ENCODE measurements at regions of chr11 and their contacts with region 1.

Region 1: DNA sequence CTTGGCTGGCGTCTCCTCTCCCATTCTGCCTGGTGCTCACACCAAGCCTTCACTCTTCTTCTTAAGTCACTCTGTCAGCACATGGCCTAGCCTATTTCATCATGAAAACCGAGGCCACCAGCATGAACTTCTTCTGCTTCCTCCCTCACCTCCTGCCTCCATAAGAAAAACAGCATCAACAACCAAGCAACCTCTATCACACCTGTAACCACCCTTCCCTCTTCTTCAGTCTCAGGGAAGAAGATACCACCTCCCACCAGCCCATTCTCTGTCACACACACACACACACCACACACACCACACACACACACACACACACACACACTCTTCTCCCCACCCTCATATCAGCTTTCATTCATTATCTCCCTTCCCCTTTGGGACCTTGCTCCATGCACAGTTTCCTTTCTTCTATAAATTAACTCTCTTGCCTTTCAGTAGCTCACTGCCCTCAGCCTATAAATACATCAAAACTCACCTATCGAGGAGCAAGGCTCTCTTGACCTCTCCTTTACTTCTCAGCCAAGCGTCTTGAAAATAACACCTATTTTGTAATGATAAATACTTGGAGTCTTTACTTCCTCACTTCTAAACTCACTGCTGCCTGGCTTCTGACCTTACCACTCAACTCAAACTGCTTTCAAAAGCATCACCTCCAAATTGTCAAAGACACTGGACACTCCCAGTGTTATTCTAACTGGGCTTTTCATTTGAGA is 36.6 kb downstream of the SC5D start:
- DNase-seq: no peak
- H3K4me3 ChIP-seq: no peak overlapping the region
- H3K4me3 Mint-ChIP-seq: no peak overlapping the region
- H3K27ac Mint-ChIP-seq: no peak overlapping the region
- H3K4me1 ChIP-seq: peaks cover 10% of the 10 kb centered on the region
- H3K4me1 Mint-ChIP-seq: no peaks in the 10 kb centered on the region
- H3K27me3 ChIP-seq: no peaks in the 10 kb centered on the region
- H3K27me3 Mint-ChIP-seq: no peaks in the 10 kb centered on the region
- CTCF ChIP-seq: no peak

Region 2: DNA sequence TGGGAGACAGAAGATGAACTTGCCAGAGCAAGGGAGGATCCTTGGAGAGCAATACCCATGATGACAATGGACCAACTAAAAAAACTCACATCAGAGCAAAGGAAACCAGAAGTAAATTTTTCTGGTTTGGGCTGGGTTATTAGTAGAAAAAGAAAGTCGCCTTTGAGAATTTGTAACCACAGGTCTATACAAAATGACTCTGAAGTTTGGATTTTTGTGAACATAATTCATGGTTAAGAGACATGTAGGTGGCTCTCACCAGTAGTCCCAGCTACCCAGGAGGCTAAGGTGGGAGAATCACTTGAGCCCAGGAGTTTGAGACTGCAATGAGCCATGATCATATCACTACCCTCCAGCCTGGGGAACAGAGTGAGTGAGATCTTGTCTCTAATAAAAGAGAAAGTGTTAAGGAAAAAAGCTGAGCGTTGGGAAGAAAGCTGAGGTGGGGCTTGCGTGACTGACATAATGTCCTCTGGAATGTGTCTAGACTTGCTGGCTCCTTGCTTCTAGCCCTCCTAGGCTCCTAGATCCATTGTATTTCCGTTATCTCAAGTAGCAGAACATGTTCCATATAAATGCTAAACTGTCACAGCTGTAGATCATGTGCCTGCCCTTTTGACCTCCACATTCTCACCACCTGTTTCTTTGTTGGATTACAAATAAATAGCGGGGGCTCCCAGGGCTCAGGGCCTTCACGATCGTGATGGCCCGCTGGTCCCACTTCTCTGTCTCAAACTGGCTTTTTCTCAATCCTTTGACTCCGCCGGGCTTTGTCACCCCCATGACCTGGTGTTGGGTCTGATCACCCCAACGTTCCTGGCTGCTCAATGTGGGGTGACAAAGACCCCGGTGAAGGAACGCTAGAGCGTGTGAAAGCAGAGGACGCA is 92.8 kb before region 1 on chr11:
- CTCF ChIA-PET with region 1: no interaction called
- POLR2A ChIA-PET with region 1: no interaction called
- intact Hi-C with region 1: no loop called
- DNase-seq: no peak
- H3K4me3 ChIP-seq: no peak overlapping the region
- H3K4me3 Mint-ChIP-seq: no peak overlapping the region
- H3K27ac Mint-ChIP-seq: no peak overlapping the region
- H3K4me1 ChIP-seq: peaks cover 19% of the 10 kb centered on the region
- H3K4me1 Mint-ChIP-seq: peaks cover 26% of the 10 kb centered on the region
- H3K27me3 ChIP-seq: no peaks in the 10 kb centered on the region
- H3K27me3 Mint-ChIP-seq: peaks cover 5% of the 10 kb centered on the region
- CTCF ChIP-seq: no peak

Region 3: DNA sequence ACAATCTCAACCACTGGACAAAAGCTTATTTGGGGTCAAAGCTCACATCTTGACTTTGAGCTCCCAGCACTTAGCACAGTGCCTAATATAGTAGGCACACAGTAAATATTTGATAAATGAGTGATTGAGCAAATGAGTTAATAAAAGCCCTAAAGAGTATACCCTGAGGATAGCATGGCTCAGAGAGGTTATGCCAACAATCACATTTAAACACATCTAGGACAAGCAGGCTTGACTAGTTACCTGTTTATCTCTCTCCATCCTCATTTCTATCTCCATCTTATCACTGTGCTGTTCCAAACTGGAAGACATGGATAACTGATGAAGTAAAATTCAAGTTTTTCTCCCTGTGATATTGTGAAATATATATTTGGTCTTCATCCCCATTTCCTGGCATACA is 25.9 kb after region 1 on chr11:
- CTCF ChIA-PET with region 1: no interaction called
- POLR2A ChIA-PET with region 1: no interaction called
- intact Hi-C with region 1: loop called (anchors 2 kb)
- DNase-seq: no peak
- H3K4me3 ChIP-seq: no peak overlapping the region
- H3K4me3 Mint-ChIP-seq: no peak overlapping the region
- H3K27ac Mint-ChIP-seq: no peak overlapping the region
- H3K4me1 ChIP-seq: peaks cover 8% of the 10 kb centered on the region
- H3K4me1 Mint-ChIP-seq: peaks cover 8% of the 10 kb centered on the region
- H3K27me3 ChIP-seq: no peaks in the 10 kb centered on the region
- H3K27me3 Mint-ChIP-seq: peaks cover 7% of the 10 kb centered on the region
- CTCF ChIP-seq: no peak

Region 4: GRCh38 chr11:121389651-121390050 is 60.5 kb after region 1 on chr11:
- CTCF ChIA-PET with region 1: no interaction called
- POLR2A ChIA-PET with region 1: no interaction called
- intact Hi-C with region 1: no loop called
- DNase-seq: no peak
- H3K4me3 ChIP-seq: no peak overlapping the region
- H3K4me3 Mint-ChIP-seq: no peak overlapping the region
- H3K27ac Mint-ChIP-seq: no peak overlapping the region
- H3K4me1 ChIP-seq: no peaks in the 10 kb centered on the region
- H3K4me1 Mint-ChIP-seq: no peaks in the 10 kb centered on the region
- H3K27me3 ChIP-seq: peaks cover 2% of the 10 kb centered on the region; the same call in 1 of the 2 replicates
- H3K27me3 Mint-ChIP-seq: peaks cover 17% of the 10 kb centered on the region
- CTCF ChIP-seq: no peak

Measured in Caco-2 (cell line).